ENCODE measurements at regions of chr15 and their contacts with region 1.

Region 1: DNA sequence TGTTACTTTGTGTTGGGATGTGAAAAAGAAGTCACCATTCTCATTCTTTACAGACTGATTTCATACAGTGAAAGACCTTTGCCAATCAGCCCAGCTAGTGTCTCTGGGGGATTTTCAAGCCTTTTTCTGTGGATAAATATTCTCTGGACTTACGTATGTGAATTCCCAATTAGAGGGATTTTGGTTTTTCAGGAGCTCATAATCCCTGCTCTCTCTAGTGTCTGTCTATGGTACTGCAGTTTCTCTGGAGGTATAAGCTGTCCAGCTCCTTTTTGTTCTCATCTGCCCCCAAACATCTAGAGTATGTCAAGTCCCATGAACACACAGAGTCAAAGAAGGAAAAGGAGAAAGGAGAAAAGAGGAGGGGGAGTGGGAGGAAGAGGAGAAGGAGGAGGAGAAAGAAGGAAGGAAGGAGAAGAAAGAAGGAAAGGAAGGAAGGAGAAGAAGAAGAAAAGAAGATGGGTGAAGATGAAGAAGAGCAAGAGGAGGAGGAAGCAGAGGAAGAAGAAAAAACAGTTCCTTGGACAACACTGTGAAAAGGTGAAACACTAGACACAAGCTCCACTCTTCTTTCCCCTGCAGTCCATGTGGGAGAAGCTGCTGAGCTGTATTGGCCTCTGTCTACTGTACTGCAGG is 218.6 kb downstream of the GREM1 start:
- DNase-seq: no peak
- H3K4me3 ChIP-seq: no peak overlapping the region
- H3K27ac ChIP-seq: no peak overlapping the region
- H3K4me1 ChIP-seq: no peaks in the 10 kb centered on the region
- H3K27me3 ChIP-seq: no peaks in the 10 kb centered on the region
- CTCF ChIP-seq: peak in 4 of 7 experiments; percentile 10 to 46 (median 20)
- EP300 ChIP-seq: no peak
- POLR2A ChIP-seq: no peak

Region 2: DNA sequence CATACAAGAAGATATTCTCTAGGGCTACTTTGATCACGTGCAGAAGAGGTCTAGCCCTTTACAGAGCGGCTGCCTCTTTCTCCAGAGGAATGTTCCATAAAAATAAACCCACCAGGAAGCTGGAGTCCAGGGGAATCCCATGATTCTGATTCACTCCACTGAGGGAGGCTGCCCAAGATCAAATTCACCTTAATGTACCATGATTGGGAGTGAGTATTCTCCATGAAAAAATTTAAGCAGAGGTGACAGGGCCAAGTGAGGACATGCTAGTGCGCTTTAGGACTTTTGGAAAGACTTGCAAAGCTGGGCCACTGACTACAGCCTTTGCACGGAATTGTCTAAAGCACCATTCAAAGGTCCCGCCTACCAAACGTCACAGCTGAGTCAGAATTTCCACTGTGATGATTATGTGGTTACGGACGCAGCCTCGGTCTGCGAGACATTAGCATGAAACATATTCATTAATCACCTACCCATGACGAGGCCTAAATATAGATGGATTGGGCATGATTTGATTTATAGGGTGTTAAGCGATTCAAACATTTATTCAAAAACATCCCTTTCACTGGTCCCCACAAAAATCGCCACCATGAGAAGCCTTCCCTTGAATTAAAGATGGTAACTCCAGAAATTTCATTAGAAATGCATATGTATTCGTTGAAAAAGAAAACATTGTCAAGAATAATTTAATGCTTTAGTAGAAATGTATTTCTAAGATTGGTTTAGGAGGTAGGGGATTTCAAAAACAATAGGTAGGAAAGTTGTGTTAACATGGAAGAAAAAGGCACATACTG is 66.0 kb before region 1 on chr15:
- intact Hi-C with region 1: loop called (anchors 10 kb)
- DNase-seq: peak in 1 of 2 donors; percentile 30
- H3K4me3 ChIP-seq: no peak overlapping the region
- H3K27ac ChIP-seq: peak overlapping the region in 4 of 5 donors; percentile 61 to 82 (median 77)
- H3K4me1 ChIP-seq: peaks cover 0 to 34% (median 15%) of the 10 kb centered on the region in 4 donors
- H3K27me3 ChIP-seq: no peaks in the 10 kb centered on the region
- CTCF ChIP-seq: no peak
- EP300 ChIP-seq: peak; percentile 95
- POLR2A ChIP-seq: no peak

Measured in stomach (tissue), 19 donors.